BJ (cell line): ENCODE measurements at regions of chr3 and their contacts with region 1.

Region 1: DNA sequence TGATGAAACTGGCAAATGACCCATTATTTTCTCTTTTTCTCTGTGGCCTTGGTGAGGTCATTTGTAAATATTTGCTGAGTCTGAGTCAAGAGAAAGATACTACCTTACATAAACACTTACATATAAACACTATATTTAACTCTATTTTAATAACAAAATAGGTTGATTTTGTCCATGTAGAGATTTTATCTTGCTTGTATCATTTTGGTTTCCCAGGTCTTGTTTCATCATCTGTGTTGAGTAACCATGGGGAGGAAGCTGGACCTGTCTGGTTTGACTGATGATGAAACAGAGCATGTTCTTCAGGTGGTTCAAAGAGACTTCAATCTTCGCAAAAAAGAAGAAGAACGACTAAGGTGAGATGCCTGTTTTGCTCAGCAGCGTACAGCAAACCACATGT is 91.2 kb downstream of the MYRIP start:
- DNase-seq: no peak
- H3K4me3 ChIP-seq: no peak overlapping the region
- H3K27me3 ChIP-seq: no peaks in the 10 kb centered on the region
- CTCF ChIP-seq: no peak

Region 2: DNA sequence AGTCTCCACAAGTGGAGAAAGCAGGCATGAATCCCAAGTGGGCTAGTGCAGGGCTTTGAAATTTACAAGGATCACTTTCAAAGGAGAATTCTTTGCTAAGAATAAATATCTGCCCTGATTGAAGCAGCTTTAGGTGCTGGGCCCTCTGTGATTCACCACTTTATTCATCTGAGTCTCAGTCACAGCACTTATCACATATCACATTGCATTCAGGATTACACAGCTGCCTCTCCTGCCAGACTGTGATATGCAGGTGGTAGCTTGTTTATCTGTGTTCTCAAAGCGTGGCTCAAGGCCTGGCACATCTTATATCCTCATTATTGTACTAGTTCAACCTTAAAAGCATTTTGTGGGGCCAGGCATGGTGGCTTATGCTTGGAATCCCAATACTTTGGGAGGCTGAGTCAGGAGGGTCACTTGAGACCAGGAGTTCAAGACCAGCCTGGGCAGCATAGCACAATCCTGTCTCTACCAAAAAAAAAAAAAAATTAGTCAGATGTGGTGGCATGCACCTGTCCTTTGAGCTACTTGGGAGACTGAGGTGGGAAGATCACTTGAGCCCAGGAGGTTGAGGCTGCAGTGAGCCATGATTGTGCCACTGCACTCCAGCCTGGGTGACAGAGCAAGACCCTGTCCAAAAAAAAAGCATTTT is 252.0 kb after region 1 on chr3:
- CTCF ChIA-PET with region 1: no interaction called
- POLR2A ChIA-PET with region 1: interaction called, 11 read pairs
- DNase-seq: no peak
- H3K4me3 ChIP-seq: no peak overlapping the region
- H3K27me3 ChIP-seq: no peaks in the 10 kb centered on the region
- CTCF ChIP-seq: no peak